GM12878 (cell line): ENCODE measurements at regions of chr3 and their contacts with region 1.

Region 1: DNA sequence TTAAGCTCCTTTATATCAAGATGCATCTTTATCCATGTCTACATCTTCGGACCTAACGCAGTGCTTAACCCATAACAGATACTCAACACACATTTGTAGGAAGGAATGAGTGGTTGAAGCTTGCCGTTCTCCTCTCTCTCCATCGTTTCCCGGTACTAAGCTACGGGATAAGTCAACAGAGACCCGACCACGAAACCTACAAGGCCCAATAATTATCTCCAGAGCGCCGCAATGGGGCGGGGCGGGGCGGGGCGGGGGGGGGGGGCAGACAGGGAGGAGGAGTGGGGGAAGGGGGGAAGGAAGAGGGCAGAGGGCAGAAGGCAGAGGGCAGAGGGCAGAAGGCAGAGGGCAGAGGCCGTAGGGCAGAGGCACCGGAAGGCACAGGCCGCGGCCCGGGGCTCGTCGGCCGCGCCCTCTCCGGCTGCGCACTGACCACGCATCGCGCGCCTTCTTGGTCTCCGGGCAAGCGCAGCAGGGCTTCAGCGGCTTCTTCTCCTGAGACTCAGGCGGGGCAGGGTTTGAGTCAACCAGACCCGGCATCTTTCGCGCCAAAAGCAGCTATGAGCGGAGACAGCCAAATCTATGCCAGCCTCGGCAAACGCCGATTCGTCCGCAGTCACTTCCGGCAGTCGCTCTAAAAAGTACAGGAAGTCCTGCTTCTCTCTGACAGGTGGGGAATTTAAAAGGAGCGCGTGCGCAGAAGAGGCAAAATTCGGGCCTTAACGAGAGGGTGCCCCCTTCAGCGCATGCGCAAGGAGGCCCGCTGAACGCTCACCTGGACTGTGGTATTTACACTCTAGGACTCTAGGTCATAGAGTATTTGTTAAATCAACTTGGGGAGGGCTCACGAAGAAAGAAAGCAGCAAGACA is at the start of gene COX17:
- DNase-seq: peak; percentile 99
- ATAC-seq: peak; percentile 88
- H3K4me3 ChIP-seq: peak within 1 kb of the TSS; percentile 90
- H3K27ac ChIP-seq: peak within 1 kb of the TSS; percentile 95
- H3K4me1 ChIP-seq: peaks cover 6% of the 10 kb centered on the region
- H3K27me3 ChIP-seq: no peaks in the 10 kb centered on the region
- CTCF ChIP-seq: no peak
- EP300 ChIP-seq: 0 out of 4 replicates have a peak, but pooled peaks have one; percentile 3 to 28
- POLR2A ChIP-seq: peak; percentile 87
- RAD21 ChIP-seq: no peak
- polyA plus RNA-seq, gene COX17: 615 to 717 TPM

Region 2: GRCh38 chr3:119257682-119258410 is 419.2 kb before region 1 on chr3:
- CTCF ChIA-PET with region 1: no interaction called
- POLR2A ChIA-PET with region 1: no interaction called
- RAD21 ChIA-PET with region 1: interaction called, 10 read pairs
- SMC1A ChIA-PET with region 1: no interaction called
- in situ Hi-C with region 1: no loop called
- intact Hi-C with region 1: no loop called
- DNase-seq: no peak
- ATAC-seq: peak; percentile 92
- H3K4me3 ChIP-seq: no peak overlapping the region
- H3K27ac ChIP-seq: no peak overlapping the region
- H3K4me1 ChIP-seq: peaks cover 10% of the 10 kb centered on the region; the same call in 1 of the 2 replicates
- H3K27me3 ChIP-seq: no peaks in the 10 kb centered on the region
- CTCF ChIP-seq: no peak
- EP300 ChIP-seq: no peak
- POLR2A ChIP-seq: no peak
- RAD21 ChIP-seq: no peak

Region 3: DNA sequence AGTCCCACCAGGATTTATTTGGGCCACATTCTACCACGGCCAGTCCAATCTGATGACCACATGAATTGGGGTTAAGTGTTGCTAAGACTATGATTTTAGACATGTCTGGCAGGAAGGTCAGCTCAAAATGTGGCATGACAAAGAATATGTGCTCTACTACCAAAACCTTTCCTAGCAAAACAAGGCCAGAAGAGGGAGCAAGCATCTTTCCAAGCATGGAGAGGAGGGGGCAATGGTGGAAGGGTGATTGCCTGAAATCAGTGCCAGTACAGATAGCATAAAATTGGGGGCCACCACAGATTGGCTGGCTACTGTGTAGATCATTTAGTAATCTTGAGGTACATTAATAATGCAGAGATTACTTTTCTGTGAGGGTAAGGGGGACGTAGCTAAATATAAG is 256.8 kb before region 1 on chr3:
- CTCF ChIA-PET with region 1: interaction called, 12 read pairs
- POLR2A ChIA-PET with region 1: no interaction called
- RAD21 ChIA-PET with region 1: interaction called, 5 read pairs
- SMC1A ChIA-PET with region 1: interaction called, 8 read pairs
- in situ Hi-C with region 1: no loop called
- intact Hi-C with region 1: no loop called
- DNase-seq: no peak
- ATAC-seq: no peak
- H3K4me3 ChIP-seq: no peak overlapping the region
- H3K27ac ChIP-seq: no peak overlapping the region
- H3K4me1 ChIP-seq: no peaks in the 10 kb centered on the region
- H3K27me3 ChIP-seq: no peaks in the 10 kb centered on the region
- CTCF ChIP-seq: no peak; a peak in 1 of 6 replicates
- EP300 ChIP-seq: no peak
- POLR2A ChIP-seq: no peak
- RAD21 ChIP-seq: peak; percentile 28; the same call in 1 of the 2 replicates

Region 4: DNA sequence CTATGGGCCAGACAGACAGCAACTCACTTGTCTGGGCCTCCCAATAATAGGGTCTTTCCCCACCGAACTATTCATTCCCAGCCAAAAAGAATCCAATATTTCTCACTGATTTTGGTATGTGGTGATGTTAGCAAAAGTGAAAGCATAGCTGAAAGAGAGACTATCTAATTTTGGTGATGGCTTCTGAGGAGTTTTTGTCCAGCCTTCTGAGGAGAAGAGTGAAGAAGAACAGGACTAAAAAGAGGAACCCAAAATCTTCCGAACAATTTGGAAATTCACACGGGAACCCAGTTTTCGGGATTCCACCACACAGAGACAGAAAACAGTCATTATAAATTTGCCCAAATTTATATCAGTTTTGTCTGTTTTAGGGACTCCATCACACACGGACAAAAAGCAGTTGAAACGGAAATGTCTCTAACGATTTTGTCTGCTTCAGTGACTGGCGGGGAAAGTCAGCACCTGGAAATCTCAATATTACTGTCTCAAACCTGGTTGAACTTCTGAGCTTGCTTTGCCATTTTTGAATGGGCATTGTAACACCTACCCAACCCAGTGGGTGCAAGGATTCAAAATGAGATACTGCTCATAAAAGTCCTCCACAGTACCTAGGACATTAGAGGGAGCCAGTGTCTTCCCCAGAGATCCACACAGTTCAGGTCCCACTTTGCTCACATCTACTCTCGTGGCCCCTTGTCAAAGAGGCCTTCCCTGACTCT is 126.7 kb before region 1 on chr3:
- CTCF ChIA-PET with region 1: interaction called, 43 read pairs
- POLR2A ChIA-PET with region 1: interaction called, 4 read pairs
- RAD21 ChIA-PET with region 1: interaction called, 15 read pairs
- SMC1A ChIA-PET with region 1: interaction called, 47 read pairs
- in situ Hi-C with region 1: no loop called
- intact Hi-C with region 1: no loop called
- DNase-seq: no peak
- ATAC-seq: peak; percentile 52
- H3K4me3 ChIP-seq: peak overlapping the region; percentile 57
- H3K27ac ChIP-seq: peak overlapping the region; percentile 93
- H3K4me1 ChIP-seq: peaks cover 43% of the 10 kb centered on the region
- H3K27me3 ChIP-seq: no peaks in the 10 kb centered on the region
- CTCF ChIP-seq: peak; percentile 11 to 50 (median 12); a peak in 3 of 6 replicates
- EP300 ChIP-seq: no peak
- POLR2A ChIP-seq: peak; percentile 54
- RAD21 ChIP-seq: peak; percentile 52

Region 5: DNA sequence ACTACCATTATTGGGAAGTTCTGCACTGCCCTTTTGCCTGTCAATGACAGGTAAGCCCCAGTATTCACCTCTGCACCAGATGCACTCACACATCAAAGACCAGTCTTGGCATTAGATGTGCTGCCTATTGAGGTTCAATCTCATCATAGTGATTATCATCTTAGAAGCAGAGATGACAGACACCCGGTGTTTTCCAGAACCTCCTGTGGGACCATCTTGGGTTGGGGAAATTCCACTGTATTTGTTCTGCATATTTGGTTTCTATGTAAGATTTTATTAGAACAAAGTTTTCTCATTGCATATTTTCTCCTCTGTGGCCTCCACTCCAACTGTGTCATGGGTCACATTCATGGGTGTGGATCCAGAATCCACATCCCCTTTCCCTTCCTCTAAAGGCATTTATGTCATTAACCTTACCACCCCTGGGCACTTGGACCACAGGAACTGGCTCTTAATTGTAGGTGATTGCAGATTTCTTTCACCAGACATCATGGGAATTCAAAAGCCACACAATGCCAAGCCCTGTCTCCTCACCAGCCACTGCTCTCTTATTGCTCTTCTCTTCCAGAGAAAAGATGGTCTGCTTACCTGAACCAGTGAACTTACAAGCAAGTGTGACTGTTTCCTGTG is 48.1 kb before region 1 on chr3:
- CTCF ChIA-PET with region 1: interaction called, 17 read pairs
- POLR2A ChIA-PET with region 1: interaction called, 7 read pairs
- RAD21 ChIA-PET with region 1: interaction called, 15 read pairs
- SMC1A ChIA-PET with region 1: interaction called, 21 read pairs
- in situ Hi-C with region 1: no loop called
- intact Hi-C with region 1: loop called (anchors 2 kb)
- DNase-seq: peak; percentile 64
- ATAC-seq: peak; percentile 71
- H3K4me3 ChIP-seq: peak overlapping the region; percentile 24; the same call in 1 of the 2 replicates
- H3K27ac ChIP-seq: peak overlapping the region; percentile 84
- H3K4me1 ChIP-seq: peaks cover 49% of the 10 kb centered on the region
- H3K27me3 ChIP-seq: no peaks in the 10 kb centered on the region
- CTCF ChIP-seq: no peak
- EP300 ChIP-seq: peak in 1 of 2 experiments; percentile 18; a peak in 1 of 4 replicates
- POLR2A ChIP-seq: no peak
- RAD21 ChIP-seq: no peak

Region 6: GRCh38 chr3:119690043-119690656 is 13.1 kb after region 1 on chr3:
- CTCF ChIA-PET with region 1: interaction called, 167 read pairs
- POLR2A ChIA-PET with region 1: interaction called, 5 read pairs
- RAD21 ChIA-PET with region 1: interaction called, 18 read pairs
- SMC1A ChIA-PET with region 1: interaction called, 106 read pairs
- in situ Hi-C with region 1: no loop called
- intact Hi-C with region 1: no loop called
- DNase-seq: no peak
- ATAC-seq: peak; percentile 62
- H3K4me3 ChIP-seq: no peak overlapping the region
- H3K27ac ChIP-seq: no peak overlapping the region
- H3K4me1 ChIP-seq: no peaks in the 10 kb centered on the region
- H3K27me3 ChIP-seq: no peaks in the 10 kb centered on the region
- CTCF ChIP-seq: peak; percentile 21 to 53 (median 23); a peak in 4 of 6 replicates
- EP300 ChIP-seq: no peak
- POLR2A ChIP-seq: no peak
- RAD21 ChIP-seq: no peak

Region 7: DNA sequence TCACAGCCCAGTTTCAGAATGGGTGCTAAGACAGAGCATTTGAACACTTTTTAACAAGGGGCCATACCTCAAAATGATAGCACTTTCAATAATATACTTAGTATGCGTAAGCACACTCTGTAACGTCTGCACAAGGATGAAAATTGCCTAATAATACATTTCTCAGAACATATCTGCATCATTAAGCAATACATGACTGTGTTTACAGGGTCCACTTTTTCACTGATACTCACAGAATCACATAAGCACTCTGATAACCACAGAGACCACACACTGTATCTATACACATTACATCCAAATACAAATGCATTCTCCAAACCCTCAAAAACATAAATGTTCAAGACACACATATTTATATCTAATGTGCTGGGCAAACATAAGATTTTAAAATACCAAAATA is 184.7 kb after region 1 on chr3:
- CTCF ChIA-PET with region 1: no interaction called
- POLR2A ChIA-PET with region 1: no interaction called
- RAD21 ChIA-PET with region 1: no interaction called
- SMC1A ChIA-PET with region 1: no interaction called
- in situ Hi-C with region 1: no loop called
- intact Hi-C with region 1: no loop called
- DNase-seq: no peak
- ATAC-seq: no peak
- H3K4me3 ChIP-seq: no peak overlapping the region
- H3K27ac ChIP-seq: no peak overlapping the region
- H3K4me1 ChIP-seq: no peaks in the 10 kb centered on the region
- H3K27me3 ChIP-seq: no peaks in the 10 kb centered on the region
- CTCF ChIP-seq: no peak
- EP300 ChIP-seq: no peak
- POLR2A ChIP-seq: no peak
- RAD21 ChIP-seq: no peak